Calu3 (cell line): ENCODE measurements at regions of chr11 and their contacts with region 1.

Region 1: DNA sequence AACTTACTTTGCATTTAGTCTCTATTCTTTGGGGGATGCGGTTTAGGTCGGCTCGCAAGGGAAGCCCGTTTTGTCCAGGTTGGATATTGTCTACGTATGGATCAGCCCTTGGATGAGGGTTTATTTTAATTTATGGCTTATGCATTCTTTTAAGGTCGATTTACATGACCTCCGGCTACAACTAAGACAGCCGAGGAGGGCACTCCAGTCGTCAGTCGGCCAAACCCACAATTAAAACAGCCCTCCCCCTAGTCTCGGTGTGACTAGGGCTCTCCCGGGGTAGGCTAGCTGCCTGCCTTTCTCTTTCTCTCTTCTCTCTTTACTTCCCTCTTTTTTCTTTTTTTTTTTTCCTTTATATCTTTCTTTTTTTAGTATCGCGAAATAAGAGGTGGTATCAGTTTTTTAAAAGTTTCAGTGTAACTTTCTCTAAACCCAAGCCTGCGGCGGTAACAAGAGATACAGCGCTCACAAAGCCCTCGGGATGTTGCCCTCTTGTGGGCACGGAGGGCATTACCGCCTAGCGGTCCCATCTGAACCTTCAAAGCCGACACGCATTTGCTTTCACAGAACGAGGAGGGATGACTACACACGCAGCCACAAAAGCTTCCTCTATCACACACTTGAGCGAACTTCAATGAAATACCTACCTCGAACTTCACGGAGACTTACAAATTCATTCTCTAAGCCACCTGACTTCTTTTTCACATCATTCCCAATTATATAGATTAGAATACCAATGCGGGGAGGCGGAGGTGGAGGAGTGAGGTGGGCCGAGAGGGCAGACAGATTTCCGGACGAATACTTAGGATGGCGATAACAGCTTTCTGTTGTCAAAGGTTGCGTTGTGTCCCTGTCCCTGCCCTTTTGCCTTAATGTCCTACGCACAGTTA is 132.3 kb upstream of the C11orf58 start:
- DNase-seq: peak; percentile 93
- H3K4me3 Mint-ChIP-seq: no peak overlapping the region
- H3K27ac Mint-ChIP-seq: peak overlapping the region; percentile 51
- H3K4me1 Mint-ChIP-seq: peaks cover 14% of the 10 kb centered on the region
- H3K27me3 Mint-ChIP-seq: peaks cover 2% of the 10 kb centered on the region
- CTCF ChIP-seq: peak; percentile 92

Region 2: DNA sequence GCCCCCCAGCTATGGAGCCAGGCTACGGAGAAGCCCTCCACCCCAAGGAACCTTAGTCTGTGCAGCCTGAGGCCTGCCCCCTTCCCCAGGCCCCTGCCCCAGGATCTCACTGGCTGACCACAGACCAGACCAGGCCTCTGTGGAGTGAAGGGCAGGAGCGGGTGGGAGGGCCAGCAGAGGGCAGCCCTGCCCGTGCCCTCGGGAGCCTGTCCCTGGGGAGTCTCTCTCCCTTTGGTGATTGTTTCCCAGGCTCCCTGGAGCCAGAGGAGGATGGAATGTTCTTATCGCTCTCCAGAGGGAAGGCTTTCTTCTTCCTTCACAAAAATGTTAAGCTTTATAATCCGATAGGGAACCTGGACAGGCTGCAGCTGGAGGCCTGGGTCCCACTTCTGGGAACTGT is 705.1 kb before region 1 on chr11:
- CTCF ChIA-PET with region 1: no interaction called
- intact Hi-C with region 1: loop called (anchors 2 kb)
- DNase-seq: peak; percentile 57
- H3K4me3 Mint-ChIP-seq: no peak overlapping the region
- H3K27ac Mint-ChIP-seq: no peak overlapping the region
- H3K4me1 Mint-ChIP-seq: peaks cover 22% of the 10 kb centered on the region
- H3K27me3 Mint-ChIP-seq: no peaks in the 10 kb centered on the region
- CTCF ChIP-seq: peak; percentile 46

Region 3: GRCh38 chr11:16001899-16002426 is 604.2 kb before region 1 on chr11:
- CTCF ChIA-PET with region 1: interaction called, 5 read pairs
- intact Hi-C with region 1: loop called (anchors 10 kb)
- DNase-seq: peak; percentile 75
- H3K4me3 Mint-ChIP-seq: peak overlapping the region; percentile 43
- H3K27ac Mint-ChIP-seq: peak overlapping the region; percentile 94
- H3K4me1 Mint-ChIP-seq: peaks cover 38% of the 10 kb centered on the region
- H3K27me3 Mint-ChIP-seq: no peaks in the 10 kb centered on the region
- CTCF ChIP-seq: no peak

Region 4: GRCh38 chr11:16154715-16155396 is 451.3 kb before region 1 on chr11:
- CTCF ChIA-PET with region 1: no interaction called
- intact Hi-C with region 1: loop called (anchors 5 kb)
- DNase-seq: peak; percentile 69
- H3K4me3 Mint-ChIP-seq: peak overlapping the region; percentile 4
- H3K27ac Mint-ChIP-seq: no peak overlapping the region
- H3K4me1 Mint-ChIP-seq: peaks cover 12% of the 10 kb centered on the region
- H3K27me3 Mint-ChIP-seq: no peaks in the 10 kb centered on the region
- CTCF ChIP-seq: no peak

Region 5: DNA sequence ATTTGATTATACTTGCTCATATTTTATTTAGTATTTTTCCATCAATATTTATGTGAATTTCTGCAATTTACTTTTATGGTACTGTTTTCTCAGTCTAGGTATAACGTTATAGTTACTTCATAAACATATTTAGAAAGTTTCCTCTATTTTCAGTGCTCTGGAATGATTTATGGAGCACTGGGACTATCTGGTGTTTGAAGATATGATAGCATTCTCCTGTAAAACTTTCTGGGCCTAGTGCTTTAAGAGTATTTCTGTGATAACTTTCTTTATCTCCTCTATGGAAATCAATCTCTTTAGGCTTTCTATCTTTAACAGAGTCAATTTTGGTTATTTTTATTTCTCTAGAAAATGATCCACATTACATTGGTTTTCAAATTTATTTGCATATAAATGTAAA is 334.9 kb before region 1 on chr11:
- CTCF ChIA-PET with region 1: no interaction called
- intact Hi-C with region 1: loop called (anchors 5 kb)
- DNase-seq: no peak
- H3K4me3 Mint-ChIP-seq: no peak overlapping the region
- H3K27ac Mint-ChIP-seq: no peak overlapping the region
- H3K4me1 Mint-ChIP-seq: no peaks in the 10 kb centered on the region
- H3K27me3 Mint-ChIP-seq: no peaks in the 10 kb centered on the region
- CTCF ChIP-seq: no peak

Region 6: DNA sequence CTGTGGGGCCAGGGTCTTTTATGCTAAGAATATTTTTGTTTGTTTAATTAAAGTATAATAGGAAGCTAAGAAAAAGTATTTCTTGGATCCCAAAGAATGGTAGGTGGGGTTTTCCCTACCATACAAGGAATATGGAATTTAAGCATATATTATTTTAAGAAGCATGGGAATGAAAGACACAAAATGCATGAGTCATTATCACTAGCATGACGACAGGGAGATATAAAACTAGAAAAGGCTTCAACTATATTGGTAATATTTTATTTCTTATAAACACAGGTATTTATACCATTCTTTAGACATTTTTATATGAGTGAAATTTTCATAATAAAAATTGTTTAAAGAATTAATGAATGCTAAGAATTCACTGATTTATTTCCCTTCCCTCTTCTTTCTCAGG is 210.5 kb before region 1 on chr11:
- CTCF ChIA-PET with region 1: no interaction called
- intact Hi-C with region 1: loop called (anchors 5 kb)
- DNase-seq: no peak
- H3K4me3 Mint-ChIP-seq: peak overlapping the region; percentile 35
- H3K27ac Mint-ChIP-seq: peak overlapping the region; percentile 33
- H3K4me1 Mint-ChIP-seq: peaks cover 36% of the 10 kb centered on the region
- H3K27me3 Mint-ChIP-seq: no peaks in the 10 kb centered on the region
- CTCF ChIP-seq: no peak